K562 (cell line): ENCODE measurements at regions of chr20 and their contacts with region 1.

Region 1: GRCh38 chr20:18019070-18019469 is 38.6 kb downstream of the OVOL2 start:
- DNase-seq: peak; percentile 21 to 46 (median 35)
- ATAC-seq: peak; percentile 91
- H3K4me3 ChIP-seq: no peak overlapping the region
- H3K27ac ChIP-seq: no peak overlapping the region
- H3K4me1 ChIP-seq: no peaks in the 10 kb centered on the region
- H3K27me3 ChIP-seq: peaks cover 0 to 12% of the 10 kb centered on the region in 2 experiments; a peak in 2 of 5 replicates
- CTCF ChIP-seq: peak; percentile 54 to 65 (median 62); a peak in 5 of 6 replicates
- EP300 ChIP-seq: no peak
- POLR2A ChIP-seq: no peak
- RAD21 ChIP-seq: peak; percentile 17 to 47; a peak in 2 of 4 replicates

Region 2: GRCh38 chr20:17636523-17637412 is 382.3 kb before region 1 on chr20:
- CTCF ChIA-PET with region 1: no interaction called
- POLR2A ChIA-PET with region 1: no interaction called
- in situ Hi-C with region 1: no loop called
- intact Hi-C with region 1: no loop called
- DNase-seq: no peak
- ATAC-seq: no peak
- H3K4me3 ChIP-seq: no peak overlapping the region
- H3K27ac ChIP-seq: no peak overlapping the region
- H3K4me1 ChIP-seq: peaks cover 0 to 6% of the 10 kb centered on the region in 2 experiments; a peak in 2 of 5 replicates
- H3K27me3 ChIP-seq: no peaks in the 10 kb centered on the region
- CTCF ChIP-seq: no peak
- EP300 ChIP-seq: no peak
- POLR2A ChIP-seq: no peak
- RAD21 ChIP-seq: no peak

Region 3: GRCh38 chr20:17938871-17939619 is 80.0 kb before region 1 on chr20:
- CTCF ChIA-PET with region 1: no interaction called
- POLR2A ChIA-PET with region 1: no interaction called
- in situ Hi-C with region 1: no loop called
- intact Hi-C with region 1: no loop called
- DNase-seq: peak; percentile 65 to 76 (median 69)
- ATAC-seq: peak; percentile 89
- H3K4me3 ChIP-seq: no peak overlapping the region
- H3K27ac ChIP-seq: peak overlapping the region; percentile 77
- H3K4me1 ChIP-seq: peaks cover 7 to 23% of the 10 kb centered on the region in 2 experiments; a peak in 4 of 5 replicates
- H3K27me3 ChIP-seq: no peaks in the 10 kb centered on the region
- CTCF ChIP-seq: peak; percentile 80 to 92 (median 88)
- EP300 ChIP-seq: no peak
- POLR2A ChIP-seq: no peak
- RAD21 ChIP-seq: peak; percentile 82 to 86

Region 4: DNA sequence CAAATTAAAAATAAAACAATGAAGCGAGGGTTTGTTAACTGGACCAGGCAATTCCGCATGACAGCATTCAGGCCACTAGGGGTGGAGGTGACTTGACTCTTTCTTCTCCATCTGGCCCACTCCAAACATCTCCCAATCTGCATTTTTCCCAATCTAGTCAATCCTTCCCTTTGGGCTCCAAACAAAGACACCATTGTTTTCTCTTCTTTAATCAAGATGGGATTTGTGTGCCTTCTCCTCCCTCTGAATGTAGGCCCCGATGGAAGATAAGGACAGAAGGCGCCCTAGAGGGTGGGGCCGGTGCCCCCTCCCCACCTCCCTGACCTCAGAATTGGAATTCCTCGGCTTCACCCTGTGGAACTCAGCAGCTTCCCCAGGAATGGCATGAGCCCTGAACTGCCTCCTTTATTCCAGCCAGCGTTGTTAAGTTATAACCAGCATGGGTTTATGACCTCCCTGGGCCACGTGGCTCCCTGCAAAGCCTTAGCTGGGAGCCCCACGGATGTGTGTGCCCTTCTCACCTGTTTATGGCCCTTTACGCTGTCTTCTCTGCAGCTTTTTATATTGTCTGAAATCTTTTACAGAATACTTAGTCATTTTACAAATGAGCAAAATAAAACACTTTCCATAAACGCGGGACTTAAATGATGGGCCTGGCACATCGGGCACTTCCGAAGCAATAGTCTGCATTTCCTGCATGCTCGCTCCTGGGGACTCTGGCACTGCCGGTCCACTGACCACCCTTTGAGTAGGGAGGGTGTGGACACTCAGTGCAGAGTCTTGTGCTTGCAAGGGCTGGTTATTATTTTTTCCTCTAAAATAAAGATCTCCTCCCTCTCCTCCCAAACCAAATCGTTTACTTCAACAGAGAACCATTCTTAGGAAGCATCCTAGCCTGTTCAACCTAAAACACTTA is 14.2 kb after region 1 on chr20:
- CTCF ChIA-PET with region 1: no interaction called
- POLR2A ChIA-PET with region 1: no interaction called
- in situ Hi-C with region 1: no loop called
- intact Hi-C with region 1: no loop called
- DNase-seq: no peak
- ATAC-seq: no peak
- H3K4me3 ChIP-seq: no peak overlapping the region
- H3K27ac ChIP-seq: no peak overlapping the region
- H3K4me1 ChIP-seq: no peaks in the 10 kb centered on the region
- H3K27me3 ChIP-seq: peaks cover 12 to 42% of the 10 kb centered on the region in 2 experiments; a peak in 4 of 5 replicates
- CTCF ChIP-seq: no peak
- EP300 ChIP-seq: no peak
- POLR2A ChIP-seq: no peak
- RAD21 ChIP-seq: no peak

Region 5: DNA sequence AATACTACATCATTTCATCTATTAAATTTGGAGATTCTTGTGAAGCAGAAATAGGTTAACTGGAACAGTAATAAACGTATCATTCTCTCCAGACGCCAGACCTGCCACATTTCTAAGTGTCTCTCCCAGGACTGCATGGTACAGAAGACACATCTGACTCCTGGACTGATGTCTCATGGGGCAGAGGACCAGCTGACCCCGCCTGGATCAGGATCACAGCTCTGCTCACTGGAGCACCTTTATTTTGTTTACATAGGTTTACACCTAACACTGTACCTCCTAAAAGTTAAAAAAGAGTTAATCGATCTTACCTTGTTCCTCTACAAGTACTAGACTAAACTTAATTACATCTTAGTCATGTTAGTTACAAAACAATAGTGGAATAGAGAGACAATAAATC is 27.5 kb after region 1 on chr20:
- CTCF ChIA-PET with region 1: no interaction called
- POLR2A ChIA-PET with region 1: no interaction called
- in situ Hi-C with region 1: no loop called
- intact Hi-C with region 1: no loop called
- DNase-seq: no peak
- ATAC-seq: no peak
- H3K4me3 ChIP-seq: no peak overlapping the region
- H3K27ac ChIP-seq: no peak overlapping the region
- H3K4me1 ChIP-seq: no peaks in the 10 kb centered on the region
- H3K27me3 ChIP-seq: peaks cover 7 to 28% of the 10 kb centered on the region in 2 experiments
- CTCF ChIP-seq: no peak
- EP300 ChIP-seq: no peak
- POLR2A ChIP-seq: no peak
- RAD21 ChIP-seq: no peak

Region 6: GRCh38 chr20:18276821-18277220 is 257.8 kb after region 1 on chr20:
- CTCF ChIA-PET with region 1: no interaction called
- POLR2A ChIA-PET with region 1: no interaction called
- in situ Hi-C with region 1: no loop called
- intact Hi-C with region 1: loop called (anchors 10 kb)
- DNase-seq: peak; percentile 20 to 77 (median 40)
- ATAC-seq: peak; percentile 97
- H3K4me3 ChIP-seq: no peak overlapping the region
- H3K27ac ChIP-seq: no peak overlapping the region
- H3K4me1 ChIP-seq: no peaks in the 10 kb centered on the region; a peak in 1 of 5 replicates
- H3K27me3 ChIP-seq: peaks cover 0 to 2% of the 10 kb centered on the region in 2 experiments; a peak in 4 of 5 replicates
- CTCF ChIP-seq: peak; percentile 78 to 82 (median 82)
- EP300 ChIP-seq: no peak
- POLR2A ChIP-seq: no peak
- RAD21 ChIP-seq: peak; percentile 55 to 77